Endothelial cell of umbilical vein (primary cell): ENCODE measurements at regions of chr11 and their contacts with region 1.

Region 1: GRCh38 chr11:19903620-19904069 is 191.0 kb downstream of the NAV2 start:
- DNase-seq: peak; percentile 74
- H3K4me3 ChIP-seq: no peak overlapping the region
- H3K27ac ChIP-seq: no peak overlapping the region
- H3K4me1 ChIP-seq: no peaks in the 10 kb centered on the region
- H3K27me3 ChIP-seq: no peaks in the 10 kb centered on the region
- CTCF ChIP-seq: peak; percentile 79 to 82
- POLR2A ChIP-seq: no peak

Region 2: GRCh38 chr11:19553683-19554333 is 349.8 kb before region 1 on chr11:
- CTCF ChIA-PET with region 1: interaction called, 91 read pairs
- POLR2A ChIA-PET with region 1: no interaction called
- dilution Hi-C with region 1: no loop called
- intact Hi-C with region 1: loop called (anchors 1 kb)
- DNase-seq: peak; percentile 65
- H3K4me3 ChIP-seq: no peak overlapping the region
- H3K27ac ChIP-seq: no peak overlapping the region
- H3K4me1 ChIP-seq: no peaks in the 10 kb centered on the region
- H3K27me3 ChIP-seq: no peaks in the 10 kb centered on the region
- CTCF ChIP-seq: peak; percentile 79 to 81
- POLR2A ChIP-seq: no peak

Region 3: DNA sequence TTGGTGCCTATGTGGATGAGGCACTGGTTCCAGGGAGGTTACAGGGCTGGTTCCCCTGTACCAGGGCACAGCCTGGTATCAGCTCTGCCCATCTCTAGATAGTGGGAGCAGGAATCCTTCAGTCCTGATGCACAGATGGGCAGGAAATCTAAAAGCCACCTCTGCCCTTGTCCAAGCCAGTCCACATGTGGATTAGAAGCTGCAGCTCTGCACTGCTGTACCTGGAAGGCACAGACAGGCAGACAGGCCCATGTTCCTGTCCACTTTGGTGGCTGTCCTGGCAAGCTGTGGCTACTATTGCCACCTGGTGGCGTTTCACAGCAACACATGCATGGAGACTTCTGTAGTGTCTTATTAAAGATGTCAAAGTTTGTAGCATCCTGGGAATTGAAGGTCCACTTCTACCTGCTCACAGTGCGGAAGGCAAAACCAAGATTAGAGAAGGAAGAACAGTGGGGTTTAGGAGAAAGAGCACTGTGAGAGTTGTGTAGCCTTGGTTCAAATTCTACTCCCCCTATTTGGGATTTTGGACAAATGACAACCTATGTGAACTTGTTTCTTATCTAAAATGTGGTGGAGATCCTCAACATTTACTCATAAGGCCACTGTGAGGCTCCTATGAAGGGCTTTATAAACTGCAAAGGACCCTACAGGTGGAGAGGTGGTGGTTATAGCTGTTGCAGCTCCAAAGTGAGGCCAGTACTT is 160.9 kb before region 1 on chr11:
- CTCF ChIA-PET with region 1: interaction called, 38 read pairs
- POLR2A ChIA-PET with region 1: no interaction called
- dilution Hi-C with region 1: no loop called
- intact Hi-C with region 1: loop called (anchors 1 kb)
- DNase-seq: peak; percentile 82
- H3K4me3 ChIP-seq: no peak overlapping the region
- H3K27ac ChIP-seq: no peak overlapping the region
- H3K4me1 ChIP-seq: peaks cover 8% of the 10 kb centered on the region
- H3K27me3 ChIP-seq: no peaks in the 10 kb centered on the region
- CTCF ChIP-seq: peak; percentile 75 to 76
- POLR2A ChIP-seq: no peak

Region 4: GRCh38 chr11:19814421-19814820 is 89.2 kb before region 1 on chr11:
- CTCF ChIA-PET with region 1: interaction called, 9 read pairs
- POLR2A ChIA-PET with region 1: no interaction called
- dilution Hi-C with region 1: no loop called
- intact Hi-C with region 1: loop called (anchors 1 kb)
- DNase-seq: no peak
- H3K4me3 ChIP-seq: no peak overlapping the region
- H3K27ac ChIP-seq: no peak overlapping the region
- H3K4me1 ChIP-seq: peaks cover 4% of the 10 kb centered on the region
- H3K27me3 ChIP-seq: no peaks in the 10 kb centered on the region
- CTCF ChIP-seq: peak in 1 of 2 donors; percentile 11
- POLR2A ChIP-seq: no peak

Region 5: GRCh38 chr11:19951558-19952115 is 48.0 kb after region 1 on chr11:
- CTCF ChIA-PET with region 1: interaction called, 5 read pairs
- POLR2A ChIA-PET with region 1: no interaction called
- dilution Hi-C with region 1: no loop called
- intact Hi-C with region 1: loop called (anchors 1 kb)
- DNase-seq: peak; percentile 81
- H3K4me3 ChIP-seq: no peak overlapping the region
- H3K27ac ChIP-seq: peak overlapping the region; percentile 40
- H3K4me1 ChIP-seq: peaks cover 27% of the 10 kb centered on the region
- H3K27me3 ChIP-seq: no peaks in the 10 kb centered on the region
- CTCF ChIP-seq: peak; percentile 33 to 50
- POLR2A ChIP-seq: no peak

Region 6: DNA sequence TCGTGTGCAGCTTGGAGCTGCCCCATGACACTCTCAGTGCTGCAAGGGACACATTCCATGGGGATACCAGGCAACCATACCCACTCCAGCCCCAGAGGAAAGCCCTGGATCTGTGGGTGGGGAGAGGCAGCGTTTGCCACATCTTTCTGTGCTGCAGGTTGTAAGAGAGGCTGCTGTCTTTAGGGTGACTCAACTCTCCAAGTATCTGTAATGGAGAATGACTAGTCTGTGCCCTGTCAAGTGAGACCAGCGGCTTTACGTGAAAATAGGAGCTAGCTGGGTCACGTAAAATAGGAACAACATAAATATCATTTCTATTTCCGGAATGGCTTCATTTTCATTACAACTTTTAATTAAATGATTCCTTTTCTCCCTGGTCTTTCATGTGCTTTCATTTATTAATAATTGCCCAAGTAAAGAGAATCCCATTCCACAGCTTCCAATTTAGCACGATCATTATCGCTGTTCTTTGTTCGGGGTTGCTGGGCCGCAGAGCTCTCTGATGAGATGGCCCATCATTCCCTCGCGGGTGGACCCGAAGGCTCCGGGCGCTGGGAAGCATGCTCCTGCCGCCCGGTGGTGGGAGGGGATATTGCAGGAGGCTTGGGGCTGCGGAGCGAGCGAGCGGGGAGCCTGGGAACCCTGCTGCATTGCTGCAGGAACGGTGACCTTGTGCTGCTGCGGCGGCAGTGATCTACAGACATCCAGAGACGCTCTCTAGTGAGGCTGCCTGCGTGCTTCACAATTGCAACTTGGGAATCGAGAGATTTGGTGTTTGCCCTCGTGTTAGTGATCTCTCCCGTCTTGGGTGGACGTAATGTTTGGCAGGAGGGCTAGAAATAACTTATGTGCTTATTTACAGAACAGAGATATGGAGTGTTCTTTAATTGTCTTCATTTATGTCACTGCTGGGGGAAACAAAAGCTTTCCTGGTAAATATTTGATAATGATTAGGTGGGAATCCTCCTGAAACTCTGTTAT is 706.4 kb after region 1 on chr11:
- CTCF ChIA-PET with region 1: interaction called, 3 read pairs
- POLR2A ChIA-PET with region 1: no interaction called
- dilution Hi-C with region 1: no loop called
- intact Hi-C with region 1: loop called (anchors 2 kb)
- DNase-seq: peak; percentile 65
- H3K4me3 ChIP-seq: no peak overlapping the region
- H3K27ac ChIP-seq: no peak overlapping the region
- H3K4me1 ChIP-seq: no peaks in the 10 kb centered on the region
- H3K27me3 ChIP-seq: peaks cover 23 to 42% of the 10 kb centered on the region in 2 experiments
- CTCF ChIP-seq: peak; percentile 83 to 96
- POLR2A ChIP-seq: no peak